ENCODE measurements at regions of chr17 and their contacts with region 1.

Region 1: GRCh38 chr17:48084932-48085444 is 16.3 kb downstream of the CBX1 start:
- DNase-seq: no peak
- H3K4me3 ChIP-seq: no peak overlapping the region
- CTCF ChIP-seq: no peak

Region 2: DNA sequence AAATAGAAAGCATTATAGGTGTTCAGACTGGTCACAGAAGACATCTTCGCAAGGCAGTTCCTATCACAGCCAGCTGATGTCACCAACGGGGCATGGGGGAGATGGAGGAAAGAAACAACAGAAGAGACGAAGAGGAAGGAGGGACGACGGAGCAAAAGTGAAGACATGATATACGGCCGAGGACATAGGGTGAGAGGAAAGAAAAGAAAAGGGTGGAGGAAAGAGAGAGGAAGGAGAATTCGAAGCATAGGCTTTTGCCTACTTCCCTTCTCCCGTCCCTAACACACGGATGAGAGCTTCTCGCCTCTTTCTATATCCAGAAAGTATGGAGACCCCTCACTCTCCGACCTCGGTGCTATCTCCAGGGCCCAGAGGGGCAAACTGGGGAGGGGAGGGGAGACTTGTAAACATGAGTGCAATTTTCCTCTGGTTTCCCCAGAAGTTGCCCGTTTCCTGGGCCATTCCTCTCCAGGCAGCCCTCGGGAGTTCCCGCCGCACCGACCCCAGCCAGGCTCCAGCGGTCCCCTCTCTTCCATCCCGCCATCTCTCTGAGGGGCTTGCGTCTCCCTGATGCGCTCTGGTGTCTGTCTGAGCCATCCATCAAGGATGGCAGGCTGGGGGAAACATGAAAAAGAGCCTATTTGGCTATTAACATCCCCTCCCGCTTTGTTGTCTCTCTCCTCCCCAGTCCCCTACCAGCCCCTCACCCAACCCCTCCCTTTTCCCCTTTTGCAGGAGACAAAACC is 73.4 kb before region 1 on chr17:
- in situ Hi-C with region 1: no loop called
- DNase-seq: no peak
- H3K4me3 ChIP-seq: peak overlapping the region; percentile 35
- CTCF ChIP-seq: peak; percentile 71

Region 3: GRCh38 chr17:48030531-48030930 is 54.5 kb before region 1 on chr17:
- in situ Hi-C with region 1: loop called (anchors 5 kb)
- DNase-seq: peak; percentile 26
- H3K4me3 ChIP-seq: no peak overlapping the region
- CTCF ChIP-seq: no peak

Region 4: GRCh38 chr17:48131216-48131824 is 46.3 kb after region 1 on chr17:
- in situ Hi-C with region 1: no loop called
- DNase-seq: peak; percentile 48
- H3K4me3 ChIP-seq: no peak overlapping the region
- CTCF ChIP-seq: peak; percentile 88

Measured in astrocyte of the cerebellum (primary cell).